CD4-positive, alpha-beta memory T cell (primary cell): ENCODE measurements at regions of chr2 and their contacts with region 1.

Region 1: DNA sequence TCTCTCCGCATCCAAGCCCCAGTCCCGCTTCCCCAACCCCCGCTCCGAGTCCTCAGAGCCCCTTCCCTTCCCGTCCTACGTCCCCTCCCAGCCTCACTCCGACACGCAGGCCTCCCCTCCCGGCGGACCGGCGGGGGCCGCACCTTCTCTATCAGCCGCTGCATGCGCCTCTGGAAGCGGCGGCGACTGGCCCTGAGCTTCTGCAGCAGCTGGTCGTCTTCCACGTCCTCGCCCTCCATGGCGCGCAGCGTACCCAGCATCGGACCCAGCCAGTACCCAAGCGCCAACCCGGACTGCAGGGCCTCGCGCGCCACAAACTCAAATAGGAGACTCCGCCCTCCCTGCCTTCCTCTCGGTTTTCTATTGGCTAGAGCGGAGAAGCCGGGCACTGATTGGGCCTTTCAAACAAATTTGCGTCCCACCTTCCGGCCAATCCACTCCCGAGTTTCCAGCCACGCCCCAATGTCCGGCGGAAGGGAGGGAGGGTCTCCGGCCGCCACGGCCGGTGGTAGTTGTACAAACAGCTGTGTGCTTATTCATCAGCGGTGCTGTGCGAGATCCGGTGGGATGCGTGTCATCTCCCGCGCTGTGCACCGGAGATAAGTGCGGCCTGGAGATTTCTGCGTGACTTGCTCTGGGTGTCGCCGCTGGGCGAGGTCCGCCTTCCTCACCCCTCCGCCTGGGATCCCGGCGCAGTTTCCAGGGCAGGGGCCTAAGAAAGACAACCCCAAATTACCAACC is at the start of gene HJURP:
- DNase-seq: peak; percentile 88 to 90 (median 89)
- H3K4me3 ChIP-seq: peak within 1 kb of the TSS; percentile 70 to 83
- H3K4me3 Mint-ChIP-seq: peak within 1 kb of the TSS; percentile 88 to 95 (median 94)
- H3K27ac ChIP-seq: peak within 1 kb of the TSS; percentile 20
- H3K27ac Mint-ChIP-seq: peak within 1 kb of the TSS; percentile 43 to 94 (median 82)
- H3K4me1 ChIP-seq: peaks cover 26% of the 10 kb centered on the region
- H3K4me1 Mint-ChIP-seq: peaks cover 4 to 38% (median 24%) of the 10 kb centered on the region in 4 donors
- H3K27me3 ChIP-seq: no peaks in the 10 kb centered on the region
- H3K27me3 Mint-ChIP-seq: peaks cover 1 to 10% of the 10 kb centered on the region in 2 donors
- total RNA-seq, gene HJURP: 0.19 to 0.44 TPM

Region 2: GRCh38 chr2:233844064-233844807 is 10.2 kb before region 1 on chr2:
- CTCF ChIA-PET with region 1: interaction called, 13 read pairs
- POLR2A ChIA-PET with region 1: no interaction called
- intact Hi-C with region 1: no loop called
- DNase-seq: no peak
- H3K4me3 ChIP-seq: no peak overlapping the region
- H3K4me3 Mint-ChIP-seq: no peak overlapping the region
- H3K27ac ChIP-seq: no peak overlapping the region
- H3K27ac Mint-ChIP-seq: no peak overlapping the region
- H3K4me1 ChIP-seq: no peaks in the 10 kb centered on the region
- H3K4me1 Mint-ChIP-seq: peaks cover 0 to 4% (median under 1%) of the 10 kb centered on the region in 4 donors
- H3K27me3 ChIP-seq: no peaks in the 10 kb centered on the region
- H3K27me3 Mint-ChIP-seq: no peaks in the 10 kb centered on the region

Region 3: GRCh38 chr2:233867993-233868532 is 13.7 kb after region 1 on chr2 and contains the start of gene MSL3B:
- CTCF ChIA-PET with region 1: interaction called, 14 read pairs
- POLR2A ChIA-PET with region 1: interaction called, 3 read pairs
- intact Hi-C with region 1: loop called (anchors 1 kb)
- DNase-seq: peak; percentile 47 to 65 (median 63)
- H3K4me3 ChIP-seq: peak within 1 kb of the TSS; percentile 71 to 76
- H3K4me3 Mint-ChIP-seq: peak within 1 kb of the TSS; percentile 88 to 95 (median 91)
- H3K27ac ChIP-seq: no peak within 1 kb of the TSS
- H3K27ac Mint-ChIP-seq: peak within 1 kb of the TSS in 6 of 7 donors; percentile 74 to 92 (median 80)
- H3K4me1 ChIP-seq: no peaks in the 10 kb centered on the region
- H3K4me1 Mint-ChIP-seq: peaks cover 2 to 8% (median 5%) of the 10 kb centered on the region in 4 donors
- H3K27me3 ChIP-seq: no peaks in the 10 kb centered on the region
- H3K27me3 Mint-ChIP-seq: peaks cover 14 to 22% of the 10 kb centered on the region in 2 donors